Activated T-helper 2 cell treated with anti-CD3 and anti-CD28 coated beads, Interferon-gamma antibody, Interleukin-2, Interleukin-4, amounts not matched to agents 10 μg/mL and 5 μg/mL and 100 μg/mL, durations not matched to agents 14 hours and 24 hours and 36 hours (primary cell): ENCODE measurements at regions of chr7 and their contacts with region 1.

Region 1: GRCh38 chr7:105289704-105290103 is 99.0 kb downstream of the SRPK2 start:
- DNase-seq: no peak
- H3K4me3 Mint-ChIP-seq: no peak overlapping the region
- H3K27ac Mint-ChIP-seq: peak overlapping the region; percentile 59
- H3K4me1 Mint-ChIP-seq: peaks cover 22% of the 10 kb centered on the region
- H3K27me3 Mint-ChIP-seq: no peaks in the 10 kb centered on the region

Region 2: GRCh38 chr7:105336009-105336408 is 46.3 kb after region 1 on chr7:
- intact Hi-C with region 1: no loop called
- DNase-seq: no peak
- H3K4me3 Mint-ChIP-seq: no peak overlapping the region
- H3K27ac Mint-ChIP-seq: no peak overlapping the region
- H3K4me1 Mint-ChIP-seq: peaks cover 11% of the 10 kb centered on the region
- H3K27me3 Mint-ChIP-seq: no peaks in the 10 kb centered on the region

Region 3: DNA sequence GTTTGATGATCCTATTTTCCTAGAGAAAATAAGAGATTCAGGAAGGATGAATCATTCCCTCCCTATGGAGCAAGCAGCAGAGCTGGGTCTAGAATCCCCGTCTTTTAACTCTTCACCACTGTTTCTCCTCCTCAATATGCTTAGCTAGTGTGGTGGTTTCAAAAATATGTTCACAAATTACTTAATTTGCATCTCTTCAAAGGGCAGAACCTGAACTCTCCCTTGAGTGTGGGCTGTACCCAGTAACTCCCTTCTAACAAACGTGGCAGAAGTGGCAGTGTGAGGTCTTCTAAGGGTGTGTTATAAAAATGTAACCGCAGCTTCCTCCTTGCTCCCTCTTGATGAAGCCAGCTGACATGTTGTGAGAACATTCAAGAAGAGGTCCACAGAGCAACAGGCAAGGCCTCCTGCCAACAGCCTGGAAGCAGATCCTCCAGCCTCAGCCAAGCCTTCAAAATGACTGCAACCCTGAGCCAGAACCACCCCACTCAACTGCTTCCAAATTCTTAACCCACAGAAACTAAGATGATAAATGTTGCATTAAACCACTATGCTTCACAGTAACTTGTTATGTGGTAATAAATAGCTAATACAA is 62.4 kb after region 1 on chr7:
- intact Hi-C with region 1: loop called (anchors 1 kb)
- DNase-seq: peak; percentile 58
- H3K4me3 Mint-ChIP-seq: peak overlapping the region; percentile 51
- H3K27ac Mint-ChIP-seq: peak overlapping the region; percentile 87
- H3K4me1 Mint-ChIP-seq: peaks cover 46% of the 10 kb centered on the region
- H3K27me3 Mint-ChIP-seq: no peaks in the 10 kb centered on the region